ENCODE measurements at regions of chr4 and their contacts with region 1.

Region 1: GRCh38 chr4:84956014-84956413 is 10.5 kb downstream of the WDFY3 start:
- DNase-seq: no peak
- ATAC-seq: peak in 3 of 4 donors; percentile 16 to 45 (median 34)
- H3K4me3 ChIP-seq: no peak overlapping the region
- H3K27ac ChIP-seq: peak overlapping the region in 1 of 12 donors; percentile 39
- H3K4me1 ChIP-seq: peaks cover 0 to 81% (median 49%) of the 10 kb centered on the region in 12 donors
- H3K27me3 ChIP-seq: no peaks in the 10 kb centered on the region
- CTCF ChIP-seq: no peak
- POLR2A ChIP-seq: no peak

Region 2: DNA sequence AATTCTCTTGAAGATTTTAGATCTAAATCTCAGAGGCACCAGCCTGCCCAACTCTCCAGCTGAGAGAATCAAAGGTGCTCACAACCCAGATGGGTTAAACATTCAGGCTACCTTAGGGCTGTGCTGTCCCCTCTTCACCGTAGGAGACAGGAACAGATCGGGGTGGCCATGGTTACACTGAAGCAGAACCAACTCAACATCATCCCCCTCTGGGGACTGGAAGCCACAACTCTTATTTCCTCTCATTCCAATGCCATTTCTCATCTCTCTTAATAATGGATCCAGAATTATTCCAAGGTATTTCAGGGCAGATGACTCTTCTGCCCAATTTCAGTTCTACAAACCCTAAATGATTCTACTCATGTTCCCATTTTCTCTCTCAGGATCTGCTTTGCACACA is 566.6 kb before region 1 on chr4:
- intact Hi-C with region 1: no loop called
- DNase-seq: no peak
- ATAC-seq: no peak
- H3K4me3 ChIP-seq: no peak overlapping the region
- H3K27ac ChIP-seq: no peak overlapping the region
- H3K4me1 ChIP-seq: no peaks in the 10 kb centered on the region
- H3K27me3 ChIP-seq: peaks cover 0 to 8% (median 0%) of the 10 kb centered on the region in 9 donors
- CTCF ChIP-seq: no peak
- POLR2A ChIP-seq: no peak

Region 3: DNA sequence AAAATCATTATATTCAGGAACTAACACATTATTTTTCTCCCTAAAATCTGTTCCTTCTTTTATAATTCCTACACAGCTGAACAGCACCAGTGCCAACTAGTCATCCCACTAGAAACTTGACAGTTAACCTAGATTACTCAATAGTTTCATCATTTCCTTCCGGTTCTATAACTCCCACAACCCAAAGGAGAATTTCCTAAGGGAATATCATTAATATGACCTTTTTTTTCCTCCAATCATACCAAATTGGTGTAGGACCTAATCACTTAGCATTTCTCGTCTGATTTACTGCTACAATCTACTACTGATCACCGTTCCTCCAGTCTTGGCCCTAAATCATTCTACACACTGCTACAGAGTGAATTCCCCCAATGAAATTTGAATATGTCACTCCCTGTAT is 35.4 kb before region 1 on chr4:
- intact Hi-C with region 1: loop called in 2 of 10 experiments (anchors 5 to 10 kb)
- DNase-seq: no peak
- ATAC-seq: peak in 3 of 4 donors; percentile 33 to 79 (median 64)
- H3K4me3 ChIP-seq: no peak overlapping the region
- H3K27ac ChIP-seq: peak overlapping the region in 5 of 12 donors; percentile 0 to 53 (median 17)
- H3K4me1 ChIP-seq: peaks cover 0 to 76% (median 32%) of the 10 kb centered on the region in 12 donors
- H3K27me3 ChIP-seq: no peaks in the 10 kb centered on the region
- CTCF ChIP-seq: no peak
- POLR2A ChIP-seq: no peak

Region 4: GRCh38 chr4:85569730-85570299 is 613.8 kb after region 1 on chr4:
- intact Hi-C with region 1: no loop called
- DNase-seq: no peak
- ATAC-seq: no peak
- H3K4me3 ChIP-seq: no peak overlapping the region
- H3K27ac ChIP-seq: no peak overlapping the region
- H3K4me1 ChIP-seq: peaks cover 0 to 5% (median 0%) of the 10 kb centered on the region in 12 donors
- H3K27me3 ChIP-seq: no peaks in the 10 kb centered on the region
- CTCF ChIP-seq: no peak
- POLR2A ChIP-seq: no peak

Measured in heart left ventricle (tissue), 16 donors.